ENCODE measurements at regions of chr3 and their contacts with region 1.

Region 1: DNA sequence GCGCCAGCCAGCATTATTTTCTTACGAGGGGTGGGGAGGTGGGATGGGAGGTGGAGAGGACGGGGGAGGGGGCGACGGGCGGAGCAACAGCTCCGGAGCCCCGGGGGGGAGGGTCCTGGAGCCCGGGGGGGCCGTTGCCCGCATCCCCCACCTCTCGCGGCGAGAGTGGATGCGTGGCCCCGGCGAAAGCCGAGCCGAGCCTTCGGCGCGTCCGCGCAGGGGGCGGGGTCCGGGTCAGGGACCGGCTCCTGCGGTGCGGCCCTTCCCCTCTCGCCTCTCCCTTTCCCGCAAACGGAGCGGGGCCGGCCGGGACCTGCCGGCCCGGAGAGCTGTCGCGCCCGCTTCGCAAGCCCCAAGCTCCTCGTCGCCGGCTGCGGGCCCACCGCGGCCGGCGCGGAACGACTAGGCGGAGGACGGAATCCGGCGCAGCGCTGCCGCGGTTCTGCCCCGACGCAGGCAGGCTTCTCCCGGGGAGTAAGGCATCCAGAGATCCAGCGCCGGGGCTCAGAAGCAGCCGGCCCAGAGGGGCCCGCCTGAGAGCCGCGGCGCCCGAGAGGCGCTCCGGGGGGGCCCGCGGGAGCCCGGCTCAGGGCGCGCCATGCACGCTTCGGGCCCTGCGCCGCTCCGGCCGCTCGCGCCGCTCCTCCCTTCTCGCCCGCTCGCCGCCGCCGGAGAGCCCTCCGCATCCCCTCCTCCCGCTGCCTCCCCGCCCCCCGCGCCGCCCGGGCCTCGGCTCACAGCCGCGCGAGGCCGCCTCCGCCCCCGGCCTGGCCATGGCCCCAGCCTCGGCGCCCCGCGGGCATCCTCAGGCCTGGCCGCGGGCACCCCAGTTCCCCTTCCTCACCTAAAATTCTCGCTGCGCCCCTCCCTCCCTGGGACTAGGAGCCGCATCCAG is 459 bp upstream of the ADCY5 start:
- DNase-seq: peak; percentile 50
- ATAC-seq: peak; percentile 33
- H3K4me3 Mint-ChIP-seq: peak overlapping the region; percentile 69
- H3K27ac Mint-ChIP-seq: no peak overlapping the region
- H3K4me1 Mint-ChIP-seq: peaks cover 17% of the 10 kb centered on the region
- H3K27me3 Mint-ChIP-seq: peaks cover 49% of the 10 kb centered on the region
- CTCF ChIP-seq: no peak

Region 2: DNA sequence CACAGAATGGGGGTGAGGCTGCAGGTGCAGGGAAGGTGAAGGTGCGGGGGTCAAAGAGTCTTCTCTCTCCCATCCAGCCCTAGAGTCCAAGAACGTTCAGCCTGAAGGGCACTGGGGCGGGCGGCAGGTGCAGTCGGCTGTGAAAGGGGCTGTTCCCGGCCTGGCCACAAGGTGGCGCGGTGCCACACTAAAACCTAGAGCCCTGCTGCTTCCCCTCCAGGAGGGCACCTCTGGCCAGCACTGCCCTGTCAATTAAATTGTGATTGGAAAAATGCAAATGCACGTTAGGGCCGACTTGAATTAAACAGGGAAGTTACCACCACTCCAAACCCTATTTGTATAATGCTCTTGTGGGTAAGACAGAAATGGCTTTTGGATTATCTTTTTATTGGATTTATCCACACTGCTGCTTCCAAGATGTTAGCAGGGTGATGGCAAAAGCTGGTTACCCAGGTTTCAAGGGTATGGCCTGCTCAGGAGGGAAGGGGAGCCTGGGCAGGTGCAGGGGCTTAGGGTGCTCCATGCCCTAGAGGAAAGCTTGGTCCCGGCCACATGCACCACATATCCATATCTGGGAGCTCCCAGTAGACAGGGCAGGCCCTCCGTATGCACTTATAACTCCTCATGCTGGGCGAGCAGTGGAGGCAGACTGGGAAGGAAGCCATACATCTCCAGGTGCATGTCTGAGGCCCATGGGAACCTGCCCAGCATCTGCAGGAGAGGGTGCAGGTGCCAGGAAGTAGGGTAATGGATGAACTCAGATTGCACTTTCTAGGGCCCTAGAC is 120.3 kb before region 1 on chr3:
- CTCF ChIA-PET with region 1: interaction called, 14 read pairs
- POLR2A ChIA-PET with region 1: no interaction called
- DNase-seq: peak; percentile 90
- ATAC-seq: peak; percentile 86
- H3K4me3 Mint-ChIP-seq: no peak overlapping the region
- H3K27ac Mint-ChIP-seq: no peak overlapping the region
- H3K4me1 Mint-ChIP-seq: peaks cover 20% of the 10 kb centered on the region
- H3K27me3 Mint-ChIP-seq: no peaks in the 10 kb centered on the region
- CTCF ChIP-seq: peak; percentile 94

Region 3: DNA sequence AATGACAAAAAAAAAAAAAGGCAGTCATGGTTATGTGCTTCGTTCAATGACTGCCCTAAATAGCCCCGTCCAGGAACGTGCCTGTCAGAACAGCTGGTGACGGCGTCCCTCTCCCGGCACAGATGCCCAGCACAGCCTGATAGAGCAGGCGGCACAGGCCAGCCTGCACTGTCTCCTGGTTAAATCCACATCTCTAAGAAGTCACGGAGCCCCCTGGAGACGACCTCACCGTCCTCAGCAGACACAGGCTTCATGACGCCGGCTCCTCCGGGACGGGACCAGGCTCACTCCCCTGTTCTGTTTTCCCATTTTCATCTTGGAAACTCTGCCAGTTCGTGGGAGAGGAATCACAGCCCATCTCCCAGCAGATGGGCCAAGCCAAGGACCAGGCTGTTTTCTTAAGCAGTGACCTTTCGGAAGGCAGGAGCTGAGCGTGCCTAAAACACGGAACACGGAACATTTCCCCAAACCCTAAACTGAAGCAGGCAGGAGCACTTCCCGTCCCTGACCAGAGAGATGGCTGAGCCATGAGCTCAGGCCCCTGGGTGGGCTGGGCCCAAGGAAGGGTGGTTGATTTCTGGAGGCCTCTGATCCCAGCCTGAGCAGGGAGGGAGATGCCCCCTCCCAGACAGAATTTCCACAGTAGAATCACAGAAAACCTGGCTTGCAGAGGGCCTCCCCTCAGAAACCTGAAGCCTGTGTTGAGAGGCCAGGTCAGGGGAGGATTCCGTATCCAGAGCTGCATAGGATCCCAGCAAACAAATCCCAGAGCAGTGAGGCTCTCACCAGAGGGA is 36.3 kb before region 1 on chr3:
- CTCF ChIA-PET with region 1: interaction called, 56 read pairs
- POLR2A ChIA-PET with region 1: no interaction called
- DNase-seq: no peak
- ATAC-seq: no peak
- H3K4me3 Mint-ChIP-seq: no peak overlapping the region
- H3K27ac Mint-ChIP-seq: 0 out of 2 replicates have a peak overlapping the region, but pooled peaks have one; percentile 25
- H3K4me1 Mint-ChIP-seq: peaks cover 14% of the 10 kb centered on the region
- H3K27me3 Mint-ChIP-seq: peaks cover 2% of the 10 kb centered on the region; the same call in 1 of the 2 replicates
- CTCF ChIP-seq: no peak

Region 4: DNA sequence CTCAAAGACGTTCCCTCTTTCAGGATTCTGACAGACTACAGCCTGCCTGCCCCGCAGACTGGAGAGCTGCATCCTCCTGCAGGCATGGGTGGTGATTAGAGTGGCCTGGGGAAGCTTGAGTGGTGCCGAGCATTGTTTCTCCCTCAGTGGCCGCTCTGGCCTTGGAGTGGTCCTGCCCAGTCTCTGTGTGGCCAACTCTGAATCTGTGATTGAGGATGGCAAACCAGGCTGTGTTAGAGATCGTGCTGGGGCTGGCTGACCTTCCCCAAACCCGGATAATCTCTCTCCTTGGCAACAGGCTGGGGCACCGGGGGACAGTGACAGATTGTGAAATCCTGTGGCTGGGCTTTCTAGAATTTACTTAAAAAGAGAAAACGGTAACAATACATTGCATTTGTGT is 10.5 kb after region 1 on chr3:
- CTCF ChIA-PET with region 1: interaction called, 43 read pairs
- POLR2A ChIA-PET with region 1: no interaction called
- DNase-seq: no peak
- ATAC-seq: peak; percentile 42
- H3K4me3 Mint-ChIP-seq: no peak overlapping the region
- H3K27ac Mint-ChIP-seq: no peak overlapping the region
- H3K4me1 Mint-ChIP-seq: peaks cover 35% of the 10 kb centered on the region
- H3K27me3 Mint-ChIP-seq: no peaks in the 10 kb centered on the region
- CTCF ChIP-seq: no peak

Region 5: GRCh38 chr3:123489400-123490004 is 40.2 kb after region 1 on chr3:
- CTCF ChIA-PET with region 1: interaction called, 46 read pairs
- POLR2A ChIA-PET with region 1: no interaction called
- DNase-seq: peak; percentile 86
- ATAC-seq: peak; percentile 95
- H3K4me3 Mint-ChIP-seq: no peak overlapping the region
- H3K27ac Mint-ChIP-seq: no peak overlapping the region
- H3K4me1 Mint-ChIP-seq: no peaks in the 10 kb centered on the region
- H3K27me3 Mint-ChIP-seq: no peaks in the 10 kb centered on the region; the same call in 1 of the 2 replicates
- CTCF ChIP-seq: peak; percentile 74